Dorsolateral prefrontal cortex (tissue), 120 donors: ENCODE measurements at regions of chr9 and their contacts with region 1.

Region 1: DNA sequence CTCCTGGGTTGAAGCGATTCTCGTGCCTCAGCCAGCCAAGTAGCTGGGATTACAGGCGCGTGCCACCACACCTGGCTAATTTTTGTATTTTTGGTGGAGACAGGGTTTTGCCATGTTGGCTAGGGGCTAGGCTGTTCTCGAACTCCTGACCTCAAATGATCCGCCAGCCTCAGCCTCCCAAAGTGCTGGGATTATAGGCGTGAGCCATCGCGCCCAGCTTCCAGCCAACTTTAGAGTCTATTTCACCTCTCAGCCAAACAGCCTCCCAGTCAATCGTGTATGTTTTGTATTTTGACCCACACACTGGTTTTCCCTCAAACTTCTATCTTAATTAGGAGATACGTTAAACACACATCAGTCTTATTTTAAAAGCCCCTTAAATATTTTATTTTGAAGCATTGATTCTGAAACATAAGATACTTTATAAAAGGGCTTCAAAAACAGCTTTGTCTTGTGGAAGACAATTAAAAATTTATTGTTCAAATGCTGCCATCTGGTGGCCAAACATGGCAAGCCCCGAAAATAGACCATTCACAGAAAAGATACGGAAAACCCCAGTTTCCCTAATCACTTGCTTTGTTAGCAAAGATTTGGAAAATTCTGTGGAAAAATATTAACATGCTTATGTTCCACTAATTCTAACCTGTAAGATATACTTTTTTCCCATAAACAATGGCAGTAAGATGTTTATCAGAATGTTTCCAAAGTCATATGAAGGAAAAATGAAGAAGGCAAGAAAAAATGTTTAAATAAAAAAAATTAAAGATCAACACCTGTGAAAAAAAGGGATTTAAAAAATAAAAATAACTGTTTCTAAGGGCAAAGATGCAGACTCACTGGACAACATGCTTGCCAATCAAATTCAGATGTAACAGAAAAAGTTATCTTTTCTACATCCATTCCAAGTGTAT is 33.1 kb downstream of the APTX start:
- DNase-seq: peak in 8 of 10 donors; percentile 51 to 81 (median 60)
- H3K4me3 ChIP-seq: peak overlapping the region in 2 of 59 donors; percentile 16 to 19
- H3K27ac ChIP-seq: no peak overlapping the region
- H3K27me3 ChIP-seq: no peaks in the 10 kb centered on the region
- CTCF ChIP-seq: peak; percentile 84 to 99 (median 93)

Region 2: DNA sequence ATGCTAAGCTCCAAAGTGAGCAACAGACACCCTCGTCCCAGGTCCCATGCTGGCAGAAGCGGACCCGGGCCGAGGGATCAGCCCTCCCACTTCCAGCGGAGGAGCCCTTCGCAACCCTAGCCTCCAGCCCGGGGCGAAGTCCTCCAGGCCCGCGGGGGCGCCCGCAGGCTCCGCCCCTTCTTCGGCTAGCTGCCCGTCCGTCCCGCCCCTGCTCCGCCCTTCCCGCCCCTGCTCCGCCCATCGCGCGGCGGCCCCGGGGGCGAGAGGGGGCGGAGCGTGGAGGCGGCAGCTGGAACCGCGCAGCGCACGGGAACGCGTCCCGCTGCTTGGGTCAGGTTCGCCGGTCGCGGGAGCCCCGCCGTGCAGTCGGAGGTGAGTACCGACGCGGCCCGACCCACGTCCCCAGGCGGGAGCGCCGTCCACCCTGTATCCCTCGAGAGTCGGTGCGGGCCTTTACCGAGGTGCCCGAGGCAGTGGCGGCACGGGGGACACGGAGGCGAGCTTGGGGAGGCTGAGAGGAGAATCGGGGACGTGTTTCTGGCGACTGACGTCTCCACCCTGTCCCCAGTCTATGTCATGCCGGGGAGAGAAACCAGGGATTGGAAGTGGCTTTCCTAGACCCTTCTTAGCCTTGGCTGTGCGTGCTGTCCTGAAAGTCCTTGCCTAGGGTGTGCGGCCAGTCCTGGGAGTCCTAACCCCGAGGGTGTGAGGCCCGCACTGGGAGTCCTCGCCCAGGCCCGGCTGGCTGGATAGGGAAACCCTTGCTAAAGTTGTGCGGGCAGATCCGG is 583.8 kb before region 1 on chr9 and contains the start of gene ACO1:
- intact Hi-C with region 1: loop called (anchors 2 to 5 kb)
- DNase-seq: peak; percentile 54 to 92 (median 77)
- H3K4me3 ChIP-seq: peak within 1 kb of the TSS; percentile 64 to 98 (median 87)
- H3K27ac ChIP-seq: peak within 1 kb of the TSS in 53 of 59 donors; percentile 7 to 90 (median 66)
- H3K27me3 ChIP-seq: no peaks in the 10 kb centered on the region
- CTCF ChIP-seq: peak in 53 of 56 donors; percentile 12 to 76 (median 43)
- total RNA-seq, gene ACO1: 17.4 to 32.7 (median 23.5) TPM

Region 3: DNA sequence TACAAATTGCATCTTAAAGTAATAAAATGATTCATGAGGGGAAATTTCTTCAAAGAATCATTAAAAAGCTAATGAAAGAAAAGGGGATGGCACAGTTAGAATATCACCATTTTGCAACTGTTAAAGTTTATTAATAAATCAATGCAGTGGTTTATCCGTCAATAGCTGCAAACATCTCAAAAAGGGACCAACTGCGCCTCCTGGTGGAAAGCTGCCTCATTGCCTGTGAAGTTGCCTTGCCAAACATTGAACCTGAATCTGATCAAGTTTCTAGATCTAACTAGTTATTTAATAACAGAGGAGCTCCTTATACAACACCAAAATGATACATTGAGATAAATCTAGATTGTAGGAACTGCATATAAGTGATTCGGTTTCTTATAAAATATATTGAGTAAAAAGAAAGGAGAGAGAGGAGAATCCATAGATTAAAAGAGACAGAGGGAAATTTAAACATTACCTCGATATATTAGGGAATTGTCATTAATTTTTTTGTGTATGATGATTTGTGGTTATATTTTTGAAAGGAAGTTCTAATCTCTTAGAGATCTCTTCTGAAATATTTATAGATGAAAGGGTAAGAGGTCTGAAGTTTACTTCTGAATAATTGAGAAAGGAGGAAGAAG is 388.5 kb before region 1 on chr9:
- intact Hi-C with region 1: loop called (anchors 2 to 5 kb)
- DNase-seq: peak; percentile 48 to 87 (median 68)
- H3K4me3 ChIP-seq: peak overlapping the region in 26 of 59 donors; percentile 1 to 50 (median 24)
- H3K27ac ChIP-seq: no peak overlapping the region
- H3K27me3 ChIP-seq: peaks cover 0 to 4% (median 0%) of the 10 kb centered on the region in 45 donors
- CTCF ChIP-seq: peak; percentile 87 to 100 (median 96)

Region 4: GRCh38 chr9:32589083-32589723 is 379.2 kb before region 1 on chr9:
- intact Hi-C with region 1: loop called (anchors 2 to 5 kb)
- DNase-seq: no peak
- H3K4me3 ChIP-seq: no peak overlapping the region
- H3K27ac ChIP-seq: no peak overlapping the region
- H3K27me3 ChIP-seq: peaks cover 0 to 7% (median 0%) of the 10 kb centered on the region in 45 donors
- CTCF ChIP-seq: peak; percentile 31 to 75 (median 58)

Region 5: GRCh38 chr9:32741706-32742105 is 226.7 kb before region 1 on chr9:
- intact Hi-C with region 1: no loop called
- DNase-seq: no peak
- H3K4me3 ChIP-seq: no peak overlapping the region
- H3K27ac ChIP-seq: no peak overlapping the region
- H3K27me3 ChIP-seq: no peaks in the 10 kb centered on the region
- CTCF ChIP-seq: no peak

Region 6: DNA sequence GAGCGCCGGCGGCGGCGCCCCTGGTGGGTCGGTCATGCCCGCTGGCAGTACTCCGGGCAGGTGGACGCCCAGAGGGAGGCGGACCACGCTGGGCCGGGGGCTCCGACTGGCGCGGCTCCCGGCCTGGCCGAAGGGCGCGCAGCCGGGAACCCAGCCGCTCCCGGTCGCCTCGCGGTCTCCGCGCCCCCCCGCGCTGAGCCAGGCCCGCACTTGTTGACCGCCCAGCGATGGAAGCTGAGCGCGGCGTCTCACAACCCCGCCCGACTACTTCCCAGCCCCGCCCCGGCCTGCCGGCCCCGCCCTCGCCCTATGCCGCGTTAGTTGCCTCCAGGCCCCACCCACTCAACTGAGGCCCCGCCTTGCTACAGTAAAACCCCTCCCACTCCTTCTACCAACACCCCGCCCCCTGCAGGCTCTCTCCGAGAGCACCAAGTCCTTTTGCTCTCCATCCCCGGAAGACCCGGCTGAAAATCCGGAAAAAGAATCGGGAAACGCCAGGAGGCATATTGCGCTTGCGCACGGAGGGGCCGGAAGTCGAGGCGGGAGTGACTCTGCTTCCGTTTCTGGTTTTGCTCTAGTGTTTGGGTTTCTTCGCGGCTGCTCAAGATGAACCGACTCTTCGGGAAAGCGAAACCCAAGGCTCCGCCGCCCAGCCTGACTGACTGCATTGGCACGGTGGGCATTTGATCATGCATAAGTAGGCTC is 296.3 kb after region 1 on chr9 and contains the starts of genes BAG1 and CHMP5:
- intact Hi-C with region 1: no loop called
- DNase-seq: peak; percentile 99 to 100 (median 100)
- H3K4me3 ChIP-seq: peak within 1 kb of the TSS; percentile 50 to 100 (median 94)
- H3K27ac ChIP-seq: peak within 1 kb of the TSS; percentile 49 to 95 (median 88)
- H3K27me3 ChIP-seq: no peaks in the 10 kb centered on the region
- CTCF ChIP-seq: peak in 52 of 56 donors; percentile 19 to 73 (median 50)
- total RNA-seq, gene BAG1: 49.1 to 127 (median 80.7) TPM
- total RNA-seq, gene CHMP5: 41.0 to 98.2 (median 72.4) TPM